Transverse colon (tissue), 4 donors: ENCODE measurements at regions of chr1 and their contacts with region 1.

Region 1: DNA sequence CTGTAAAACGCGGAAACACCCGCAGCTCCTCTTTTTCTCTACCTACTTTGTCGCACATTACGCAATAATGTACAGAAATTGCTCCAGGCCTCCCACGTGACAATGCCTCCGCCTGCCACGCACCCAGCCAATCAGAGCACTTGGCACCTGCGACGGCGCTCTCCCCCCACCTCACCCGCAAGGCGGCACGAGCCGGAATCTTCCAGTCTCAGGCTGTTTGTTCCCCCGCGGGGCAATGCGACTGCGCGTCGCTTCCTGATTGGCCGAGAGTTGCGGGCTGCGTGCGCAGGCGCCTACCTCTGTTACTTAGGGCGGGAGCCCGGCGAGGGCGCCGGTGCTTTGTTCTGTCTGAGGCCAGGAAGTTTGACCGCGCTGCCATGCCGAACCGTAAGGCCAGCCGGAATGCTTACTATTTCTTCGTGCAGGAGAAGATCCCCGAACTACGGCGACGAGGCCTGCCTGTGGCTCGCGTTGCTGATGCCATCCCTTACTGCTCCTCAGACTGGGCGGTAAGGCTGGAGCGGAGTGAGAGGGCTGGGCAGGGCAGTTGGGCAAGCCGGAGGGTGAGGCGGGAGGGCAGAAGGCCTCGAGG is at the start of gene MAEL:
- DNase-seq: no peak
- H3K4me3 ChIP-seq: no peak within 1 kb of the TSS
- H3K27ac ChIP-seq: no peak within 1 kb of the TSS
- H3K4me1 ChIP-seq: no peaks in the 10 kb centered on the region
- H3K27me3 ChIP-seq: no peaks in the 10 kb centered on the region
- CTCF ChIP-seq: no peak
- EP300 ChIP-seq: no peak
- POLR2A ChIP-seq: no peak
- total RNA-seq, gene MAEL: not detected

Region 2: DNA sequence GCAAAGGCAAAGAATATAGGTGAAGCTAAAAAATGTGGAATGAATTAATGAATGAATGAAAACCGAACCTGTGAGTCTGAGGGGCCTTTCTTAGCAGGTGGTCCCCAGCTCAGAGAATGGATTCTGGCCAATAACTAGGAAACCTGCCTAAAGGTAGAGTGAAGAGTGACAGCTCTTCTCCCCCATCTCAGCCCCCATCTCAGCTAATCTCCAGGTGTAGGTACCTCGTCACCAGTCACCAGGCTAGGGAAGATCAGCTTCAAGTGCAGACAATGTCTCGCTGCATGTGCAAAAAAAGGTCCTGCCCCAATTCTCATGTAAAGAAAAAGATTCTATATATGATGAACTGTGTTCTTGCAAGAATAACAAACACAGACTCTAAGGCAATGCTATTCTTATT is 24.6 kb before region 1 on chr1:
- in situ Hi-C with region 1: no loop called
- intact Hi-C with region 1: loop called (anchors 2 kb)
- DNase-seq: no peak
- H3K4me3 ChIP-seq: no peak overlapping the region
- H3K27ac ChIP-seq: no peak overlapping the region
- H3K4me1 ChIP-seq: no peaks in the 10 kb centered on the region
- H3K27me3 ChIP-seq: peaks cover 14% of the 10 kb centered on the region
- CTCF ChIP-seq: no peak
- EP300 ChIP-seq: no peak
- POLR2A ChIP-seq: no peak

Region 3: DNA sequence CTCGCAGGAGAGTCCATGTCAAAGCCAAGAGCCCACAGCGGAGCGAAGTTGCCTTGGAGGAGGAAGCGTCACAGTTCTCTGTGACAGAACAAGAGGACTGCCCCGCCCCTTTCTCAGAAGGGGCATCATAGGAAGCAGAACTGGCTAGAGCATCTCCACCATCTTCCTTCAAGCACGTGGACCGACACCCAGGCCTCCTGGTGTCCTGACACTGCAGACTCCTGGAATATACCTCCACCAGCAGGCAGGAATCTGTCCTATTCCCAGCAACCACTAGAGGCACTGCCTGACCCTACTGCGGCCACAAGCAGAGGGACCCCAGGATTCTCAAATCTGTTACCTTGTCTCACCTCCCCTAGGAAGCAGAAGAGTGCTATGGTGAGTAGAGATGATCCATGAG is 63.3 kb after region 1 on chr1:
- in situ Hi-C with region 1: no loop called
- intact Hi-C with region 1: no loop called
- DNase-seq: no peak
- H3K4me3 ChIP-seq: no peak overlapping the region
- H3K27ac ChIP-seq: no peak overlapping the region
- H3K4me1 ChIP-seq: no peaks in the 10 kb centered on the region
- H3K27me3 ChIP-seq: no peaks in the 10 kb centered on the region
- CTCF ChIP-seq: peak in 4 of 5 experiments; percentile 11 to 26 (median 16)
- EP300 ChIP-seq: no peak
- POLR2A ChIP-seq: no peak